GM10248 (cell line): ENCODE measurements at regions of chr5 and their contacts with region 1.

Region 1: GRCh38 chr5:116671211-116671736 is 96.7 kb upstream of the SEMA6A start:
- DNase-seq: peak; percentile 60
- CTCF ChIP-seq: no peak

Region 2: DNA sequence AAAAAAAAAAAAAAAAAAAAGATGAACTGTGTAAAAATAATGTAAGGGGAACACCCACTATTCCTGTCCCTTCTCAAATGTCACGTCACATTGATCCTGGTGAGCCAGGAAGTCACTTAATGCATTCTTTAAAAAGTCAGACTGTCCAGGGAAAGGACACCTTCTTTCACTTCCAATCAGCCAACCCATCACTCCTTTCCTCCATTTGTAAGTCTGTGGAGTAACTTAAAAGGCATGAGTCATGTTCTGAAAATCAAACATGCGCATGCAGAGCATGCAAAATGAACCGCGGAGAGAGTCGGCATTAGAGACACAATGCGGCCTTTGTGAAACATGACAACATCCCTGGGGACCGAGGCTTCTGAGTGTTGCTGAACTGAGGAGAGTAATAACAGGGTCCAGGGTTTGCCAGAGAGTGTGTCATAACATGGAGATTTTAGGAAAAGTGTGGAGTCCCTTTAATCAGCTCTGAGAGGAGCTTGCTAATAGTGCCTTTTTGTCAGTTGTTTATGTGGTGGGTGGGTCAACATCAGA is 19.0 kb before region 1 on chr5:
- CTCF ChIA-PET with region 1: interaction called, 21 read pairs
- POLR2A ChIA-PET with region 1: no interaction called
- DNase-seq: peak; percentile 30
- CTCF ChIP-seq: no peak

Region 3: DNA sequence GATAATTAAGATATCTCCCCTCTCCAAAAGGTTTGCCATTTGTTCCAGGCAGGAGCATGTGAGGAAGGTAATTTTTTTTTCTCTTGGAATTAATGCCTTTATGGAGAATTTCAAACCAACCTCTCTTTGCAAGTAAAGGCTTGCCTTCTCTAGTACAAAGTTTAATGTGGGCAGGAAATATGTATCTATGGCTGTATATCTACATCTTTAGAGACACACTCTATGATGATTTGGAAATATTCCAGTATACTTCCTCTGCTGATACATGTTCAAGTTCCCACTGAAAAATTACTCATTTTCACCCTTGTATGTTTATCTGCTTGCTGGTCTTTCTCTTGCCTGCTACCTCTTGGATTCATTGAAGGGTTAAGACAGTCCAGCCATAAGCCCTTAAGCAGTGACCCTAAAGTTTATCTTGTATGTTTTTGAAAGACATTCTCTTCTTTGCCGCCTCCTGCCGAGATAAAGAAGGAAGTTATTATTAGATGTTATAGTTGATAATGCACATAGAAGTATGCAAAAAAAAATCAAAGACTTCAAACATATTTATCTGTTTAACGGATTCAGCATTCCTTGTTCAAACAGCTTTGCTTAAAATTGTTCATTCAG is 13.0 kb before region 1 on chr5:
- CTCF ChIA-PET with region 1: interaction called, 21 read pairs
- POLR2A ChIA-PET with region 1: no interaction called
- DNase-seq: no peak
- CTCF ChIP-seq: no peak

Region 4: DNA sequence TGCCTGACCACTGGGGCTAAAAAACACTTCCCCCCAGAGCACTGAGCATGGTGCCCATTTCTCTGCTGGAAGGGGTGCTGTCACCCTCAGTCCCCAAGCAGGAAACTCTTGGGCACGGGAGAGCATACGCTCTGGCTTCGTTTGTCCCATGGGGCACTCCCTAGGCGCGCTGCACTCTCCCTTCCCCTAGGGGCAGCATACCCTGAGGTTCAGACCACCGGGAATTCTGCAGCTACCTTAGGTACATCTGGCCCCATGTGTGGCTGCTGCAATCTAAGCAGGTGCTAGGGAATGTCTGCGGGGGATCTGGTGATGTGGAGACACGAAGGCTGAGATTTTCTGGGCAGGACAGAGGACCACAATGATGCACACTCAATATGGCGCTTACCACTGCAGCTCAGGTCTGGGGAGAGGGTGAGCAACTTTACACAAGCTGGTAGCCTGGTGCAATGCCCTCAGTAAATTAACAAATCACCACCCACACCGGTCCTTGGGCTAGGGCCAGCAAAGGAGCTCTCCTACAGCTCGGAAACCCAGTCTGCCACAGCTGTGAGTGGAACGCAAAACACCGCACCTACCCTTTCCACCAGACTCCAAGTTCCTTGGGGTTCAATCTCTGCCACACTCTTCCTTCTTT is 784.4 kb after region 1 on chr5:
- CTCF ChIA-PET with region 1: no interaction called
- POLR2A ChIA-PET with region 1: no interaction called
- DNase-seq: no peak
- CTCF ChIP-seq: no peak